ENCODE measurements at regions of chr3 and their contacts with region 1.

Region 1: DNA sequence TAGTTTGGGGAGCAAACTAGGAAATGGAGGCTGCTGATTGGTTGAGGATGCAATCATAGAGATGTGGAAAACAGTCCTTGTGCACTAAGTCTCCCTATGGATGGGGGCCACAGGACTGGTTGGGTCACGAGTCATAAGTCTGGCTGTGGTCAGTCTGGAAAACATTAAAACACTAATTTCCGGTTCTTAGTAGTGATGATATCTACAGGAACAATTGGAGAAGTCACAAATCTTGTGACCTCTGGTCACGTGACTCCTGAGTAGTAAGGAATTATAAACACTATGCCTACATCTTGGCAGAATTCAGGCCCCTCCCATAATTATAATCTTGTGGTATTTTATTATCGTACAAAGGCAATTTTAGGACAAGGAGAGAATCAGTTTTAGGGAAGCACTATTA is 317.3 kb upstream of the ARPP21 start:
- DNase-seq: no peak
- H3K4me3 ChIP-seq: no peak overlapping the region
- H3K27ac ChIP-seq: no peak overlapping the region
- H3K4me1 ChIP-seq: no peaks in the 10 kb centered on the region
- H3K27me3 ChIP-seq: no peaks in the 10 kb centered on the region
- CTCF ChIP-seq: no peak
- EP300 ChIP-seq: no peak
- POLR2A ChIP-seq: no peak

Region 2: GRCh38 chr3:35639254-35640186 is 317.4 kb after region 1 on chr3 and contains the start of gene ARPP21:
- in situ Hi-C with region 1: no loop called
- intact Hi-C with region 1: loop called (anchors 10 kb)
- DNase-seq: no peak
- H3K4me3 ChIP-seq: peak within 1 kb of the TSS in 2 of 4 donors; percentile 11 to 34
- H3K27ac ChIP-seq: no peak within 1 kb of the TSS
- H3K4me1 ChIP-seq: peaks cover 0 to 10% (median 2%) of the 10 kb centered on the region in 4 donors
- H3K27me3 ChIP-seq: peaks cover 46% of the 10 kb centered on the region
- CTCF ChIP-seq: no peak
- EP300 ChIP-seq: no peak
- POLR2A ChIP-seq: no peak
- total RNA-seq, gene ARPP21: 0.32 TPM in 1 of 4 donors, not detected in the others

Measured in transverse colon (tissue), 4 donors.